SK-N-SH (cell line): ENCODE measurements at regions of chr12 and their contacts with region 1.

Region 1: DNA sequence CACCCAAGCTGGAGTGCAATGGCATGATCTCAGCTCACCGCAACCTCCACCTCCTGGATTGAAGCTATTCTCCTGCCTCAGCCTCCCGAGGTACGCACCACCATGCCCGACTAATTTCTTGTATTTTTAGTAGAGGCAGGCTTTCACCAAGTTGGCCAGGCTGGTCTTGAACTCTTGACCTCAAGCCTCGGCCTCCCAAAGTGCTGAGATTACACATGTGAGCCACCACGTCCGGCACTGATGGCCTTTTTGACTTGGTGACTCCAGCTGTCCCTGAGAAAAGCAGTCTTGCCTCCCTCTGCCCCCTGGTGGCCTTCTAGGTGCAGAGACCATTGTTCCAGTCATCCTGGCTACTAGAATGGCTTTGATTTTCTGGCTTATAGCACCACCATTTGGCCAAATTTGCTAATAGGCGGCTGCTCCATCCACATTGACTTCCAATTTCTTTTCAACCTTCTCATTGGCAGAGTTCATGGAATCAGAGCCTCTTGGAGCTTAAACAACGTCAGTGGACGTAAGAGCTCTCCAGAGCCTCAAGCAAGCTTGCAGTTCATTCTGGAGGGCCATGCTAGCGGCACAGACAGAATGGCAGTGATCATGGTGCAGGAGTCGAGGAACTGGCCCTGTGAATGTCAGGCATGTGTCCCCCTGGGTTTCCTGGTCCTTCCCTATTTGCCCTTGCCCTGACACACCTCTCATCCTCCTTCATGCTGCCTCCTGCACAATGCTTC is 25.4 kb upstream of the EIF4B start:
- DNase-seq: peak; percentile 83
- H3K4me3 ChIP-seq: peak overlapping the region in 1 of 2 experiments; percentile 6; a peak in 1 of 4 replicates
- H3K27ac ChIP-seq: no peak overlapping the region
- H3K4me1 ChIP-seq: peaks cover 0 to 12% of the 10 kb centered on the region in 2 experiments; a peak in 2 of 4 replicates
- H3K27me3 ChIP-seq: no peaks in the 10 kb centered on the region
- CTCF ChIP-seq: peak; percentile 100
- EP300 ChIP-seq: no peak
- RAD21 ChIP-seq: peak; percentile 99

Region 2: GRCh38 chr12:52582971-52583456 is 397.8 kb before region 1 on chr12:
- CTCF ChIA-PET with region 1: interaction called, 11 read pairs
- POLR2A ChIA-PET with region 1: no interaction called
- DNase-seq: peak; percentile 76
- H3K4me3 ChIP-seq: peak overlapping the region in 1 of 2 experiments; percentile 25; a peak in 1 of 4 replicates
- H3K27ac ChIP-seq: no peak overlapping the region
- H3K4me1 ChIP-seq: no peaks in the 10 kb centered on the region
- H3K27me3 ChIP-seq: peaks cover 44% of the 10 kb centered on the region
- CTCF ChIP-seq: peak; percentile 67
- EP300 ChIP-seq: no peak
- RAD21 ChIP-seq: peak; percentile 77

Region 3: DNA sequence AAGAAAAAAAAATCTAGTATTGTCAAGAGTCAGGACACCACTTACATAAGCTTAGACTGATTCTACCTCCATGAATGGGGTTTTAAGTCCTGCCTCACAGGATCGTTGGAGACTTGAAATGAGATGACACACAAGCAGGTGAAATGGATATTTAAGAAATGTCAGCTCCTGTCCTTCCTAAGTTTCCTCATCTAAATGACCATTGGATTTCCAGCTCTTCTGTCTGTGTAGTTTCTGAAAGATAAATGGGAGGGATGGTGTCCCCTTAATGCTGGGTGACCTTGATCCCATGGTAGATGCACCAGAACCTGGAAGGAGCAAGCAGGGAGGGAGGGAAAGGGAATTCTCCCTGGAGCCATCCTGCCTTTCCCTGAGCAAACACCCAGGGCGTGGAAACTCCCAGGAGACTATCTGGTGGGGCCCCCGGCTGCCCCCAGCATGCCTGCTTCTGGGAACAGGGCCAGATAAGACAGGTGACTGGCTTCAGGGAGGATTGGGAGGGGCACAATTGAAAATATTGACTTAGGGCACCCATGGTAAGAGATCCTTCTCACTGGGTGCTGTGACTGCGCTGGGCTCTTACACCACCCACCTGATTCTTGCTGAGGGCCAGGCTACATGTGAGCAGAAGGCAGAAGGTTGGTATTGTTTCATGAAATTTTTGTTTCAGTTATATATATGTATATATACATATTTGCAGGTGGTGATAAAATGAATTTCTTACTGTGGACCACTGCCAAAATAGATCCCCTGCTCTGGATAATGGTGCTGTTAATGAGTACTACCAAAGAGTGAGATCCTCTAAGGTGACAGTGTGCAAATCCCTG is 85.6 kb before region 1 on chr12:
- CTCF ChIA-PET with region 1: interaction called, 48 read pairs
- POLR2A ChIA-PET with region 1: no interaction called
- DNase-seq: no peak
- H3K4me3 ChIP-seq: no peak overlapping the region
- H3K27ac ChIP-seq: no peak overlapping the region
- H3K4me1 ChIP-seq: peaks cover 0 to 5% of the 10 kb centered on the region in 2 experiments; a peak in 1 of 4 replicates
- H3K27me3 ChIP-seq: no peaks in the 10 kb centered on the region
- CTCF ChIP-seq: no peak
- EP300 ChIP-seq: no peak
- RAD21 ChIP-seq: no peak

Region 4: DNA sequence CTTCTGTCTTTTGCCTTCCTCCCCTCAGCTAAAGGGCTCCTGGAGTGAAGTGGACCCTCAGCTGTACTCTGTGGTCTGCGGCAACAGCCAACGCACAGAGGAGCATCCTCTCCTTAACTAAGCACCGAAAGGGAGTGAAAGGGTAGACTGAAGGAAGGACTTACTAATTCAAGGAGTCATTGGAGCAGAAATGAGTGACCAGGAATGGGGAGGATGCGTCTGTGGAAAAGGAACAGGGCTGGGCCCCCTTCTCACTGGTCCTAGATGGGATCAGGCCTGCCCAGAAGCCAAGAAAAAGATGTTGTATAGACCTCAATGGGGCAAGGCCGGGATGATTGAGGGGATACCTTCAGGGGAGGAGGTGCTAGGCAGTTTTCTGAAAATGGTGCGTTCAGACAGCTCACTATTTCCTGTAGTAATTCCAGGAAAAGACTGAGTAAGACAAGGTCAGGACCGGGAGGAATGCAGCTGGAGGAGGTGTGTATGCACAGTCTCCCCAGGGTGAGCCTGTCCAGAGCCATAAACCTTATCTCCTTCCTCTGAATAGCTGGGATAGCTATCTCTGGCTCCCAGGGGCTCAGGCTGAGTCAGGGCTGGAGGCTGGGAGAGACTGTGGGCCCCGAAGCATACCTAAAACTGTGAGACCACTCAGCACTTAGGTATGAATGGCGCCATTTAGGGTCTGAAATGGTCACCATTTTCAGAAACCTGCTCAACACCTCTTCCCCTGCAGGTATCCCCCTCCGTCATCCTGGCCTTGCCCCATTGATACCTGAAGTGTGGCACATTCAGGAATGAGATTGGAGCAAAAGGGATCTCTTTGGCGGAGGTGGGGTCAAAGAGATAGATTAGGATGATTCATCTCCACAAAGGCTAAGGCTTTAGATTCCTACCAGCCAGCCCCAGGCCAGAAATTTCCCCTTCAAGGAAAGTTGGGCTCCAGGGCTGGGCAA is 55.8 kb before region 1 on chr12:
- CTCF ChIA-PET with region 1: interaction called, 13 read pairs
- POLR2A ChIA-PET with region 1: no interaction called
- DNase-seq: no peak
- H3K4me3 ChIP-seq: no peak overlapping the region; a peak in 1 of 4 replicates
- H3K27ac ChIP-seq: peak overlapping the region; percentile 70 to 97; a peak in 3 of 4 replicates
- H3K4me1 ChIP-seq: peaks cover 4 to 35% of the 10 kb centered on the region in 2 experiments; a peak in 3 of 4 replicates
- H3K27me3 ChIP-seq: no peaks in the 10 kb centered on the region
- CTCF ChIP-seq: no peak
- EP300 ChIP-seq: peak; percentile 18 to 94; a peak in 1 of 4 replicates
- RAD21 ChIP-seq: no peak

Region 5: DNA sequence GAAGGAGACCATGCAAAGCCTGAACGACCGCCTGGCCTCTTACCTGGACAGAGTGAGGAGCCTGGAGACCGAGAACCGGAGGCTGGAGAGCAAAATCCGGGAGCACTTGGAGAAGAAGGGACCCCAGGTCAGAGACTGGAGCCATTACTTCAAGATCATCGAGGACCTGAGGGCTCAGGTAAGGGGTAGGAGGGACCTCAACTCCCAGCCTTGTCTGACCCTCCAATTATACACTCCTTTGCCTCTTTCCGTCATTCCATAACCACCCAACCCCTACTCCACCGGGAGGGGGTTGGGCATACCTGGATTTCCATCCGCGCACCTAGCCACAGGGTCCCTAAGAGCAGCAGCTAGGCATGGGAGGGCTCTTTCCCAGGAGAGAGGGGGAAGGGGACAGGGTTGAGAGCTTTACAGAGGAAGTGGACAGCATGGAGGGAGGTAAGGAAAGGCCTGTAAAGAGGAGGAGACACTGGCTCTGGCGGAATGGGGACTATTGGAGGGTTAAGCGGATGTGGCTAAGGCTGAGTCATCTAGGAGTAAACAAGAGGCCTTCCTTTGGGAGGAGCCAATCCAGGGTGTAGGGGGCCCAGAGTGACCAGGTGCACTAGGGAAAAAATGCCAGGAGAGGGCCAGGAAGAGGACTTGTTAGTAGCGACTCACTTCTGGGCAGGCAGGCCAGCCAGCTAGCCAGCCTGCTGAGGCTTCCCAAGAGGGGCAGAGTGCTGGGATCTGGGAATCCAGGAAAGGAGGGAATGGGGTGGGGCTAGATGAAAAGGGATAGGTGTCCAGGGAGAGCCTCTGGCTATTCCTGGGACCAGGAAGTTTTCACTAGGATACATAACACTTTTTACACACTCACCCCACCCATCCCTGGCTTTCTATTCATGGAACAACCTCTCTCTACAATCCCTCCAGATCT is 31.2 kb before region 1 on chr12:
- CTCF ChIA-PET with region 1: interaction called, 31 read pairs
- POLR2A ChIA-PET with region 1: no interaction called
- DNase-seq: no peak
- H3K4me3 ChIP-seq: peak overlapping the region; percentile 49 to 85
- H3K27ac ChIP-seq: peak overlapping the region in 1 of 2 experiments; percentile 82; a peak in 2 of 4 replicates
- H3K4me1 ChIP-seq: peaks cover 0 to 32% of the 10 kb centered on the region in 2 experiments; a peak in 2 of 4 replicates
- H3K27me3 ChIP-seq: no peaks in the 10 kb centered on the region
- CTCF ChIP-seq: no peak
- EP300 ChIP-seq: no peak
- RAD21 ChIP-seq: no peak

Region 6: GRCh38 chr12:52969828-52970569 is 10.9 kb before region 1 on chr12:
- CTCF ChIA-PET with region 1: interaction called, 31 read pairs
- POLR2A ChIA-PET with region 1: no interaction called
- DNase-seq: no peak
- H3K4me3 ChIP-seq: no peak overlapping the region
- H3K27ac ChIP-seq: no peak overlapping the region
- H3K4me1 ChIP-seq: peaks cover 0 to 12% of the 10 kb centered on the region in 2 experiments; a peak in 2 of 4 replicates
- H3K27me3 ChIP-seq: no peaks in the 10 kb centered on the region
- CTCF ChIP-seq: no peak
- EP300 ChIP-seq: no peak
- RAD21 ChIP-seq: no peak

Region 7: GRCh38 chr12:53005986-53006809 is 25.3 kb after region 1 on chr12 and contains the start of gene EIF4B:
- CTCF ChIA-PET with region 1: interaction called, 11 read pairs
- POLR2A ChIA-PET with region 1: no interaction called
- DNase-seq: peak; percentile 95
- H3K4me3 ChIP-seq: peak within 1 kb of the TSS; percentile 62 to 97
- H3K27ac ChIP-seq: peak within 1 kb of the TSS; percentile 90 to 92
- H3K4me1 ChIP-seq: peaks cover 14 to 19% of the 10 kb centered on the region in 2 experiments; a peak in 3 of 4 replicates
- H3K27me3 ChIP-seq: no peaks in the 10 kb centered on the region
- CTCF ChIP-seq: no peak
- EP300 ChIP-seq: no peak
- RAD21 ChIP-seq: no peak
- polyA plus RNA-seq, gene EIF4B: 267 and 292 TPM in 2 replicates